PC-9 (cell line): ENCODE measurements at regions of chr7 and their contacts with region 1.

Region 1: GRCh38 chr7:91408388-91409154 is 144.3 kb downstream of the FZD1 start:
- DNase-seq: no peak
- H3K4me3 ChIP-seq: no peak overlapping the region
- H3K27ac ChIP-seq: no peak overlapping the region
- H3K4me1 ChIP-seq: no peaks in the 10 kb centered on the region
- H3K27me3 ChIP-seq: no peaks in the 10 kb centered on the region
- CTCF ChIP-seq: no peak

Region 2: GRCh38 chr7:91397096-91397495 is 11.5 kb before region 1 on chr7:
- CTCF ChIA-PET with region 1: no interaction called
- POLR2A ChIA-PET with region 1: no interaction called
- intact Hi-C with region 1: loop called (anchors 1 kb)
- DNase-seq: no peak
- H3K4me3 ChIP-seq: no peak overlapping the region
- H3K27ac ChIP-seq: no peak overlapping the region
- H3K4me1 ChIP-seq: no peaks in the 10 kb centered on the region
- H3K27me3 ChIP-seq: no peaks in the 10 kb centered on the region
- CTCF ChIP-seq: no peak

Region 3: GRCh38 chr7:91826377-91826776 is 417.8 kb after region 1 on chr7:
- CTCF ChIA-PET with region 1: no interaction called
- POLR2A ChIA-PET with region 1: no interaction called
- intact Hi-C with region 1: no loop called
- DNase-seq: no peak
- H3K4me3 ChIP-seq: no peak overlapping the region
- H3K27ac ChIP-seq: no peak overlapping the region
- H3K4me1 ChIP-seq: no peaks in the 10 kb centered on the region
- H3K27me3 ChIP-seq: no peaks in the 10 kb centered on the region
- CTCF ChIP-seq: no peak